ENCODE measurements at regions of chr1 and their contacts with region 1.

Region 1: GRCh38 chr1:6438047-6438525 is 13.5 kb downstream of the ESPN start:
- DNase-seq: peak; percentile 84 to 91
- H3K4me3 ChIP-seq: no peak overlapping the region
- H3K27ac ChIP-seq: no peak overlapping the region
- H3K4me1 ChIP-seq: peaks cover 3 to 11% (median 4%) of the 10 kb centered on the region in 4 experiments
- H3K27me3 ChIP-seq: peaks cover 0 to 20% (median 12%) of the 10 kb centered on the region in 4 experiments; a peak in 5 of 7 replicates
- CTCF ChIP-seq: peak; percentile 90 to 97 (median 96)
- EP300 ChIP-seq: no peak
- POLR2A ChIP-seq: no peak
- RAD21 ChIP-seq: peak; percentile 79 to 81

Region 2: DNA sequence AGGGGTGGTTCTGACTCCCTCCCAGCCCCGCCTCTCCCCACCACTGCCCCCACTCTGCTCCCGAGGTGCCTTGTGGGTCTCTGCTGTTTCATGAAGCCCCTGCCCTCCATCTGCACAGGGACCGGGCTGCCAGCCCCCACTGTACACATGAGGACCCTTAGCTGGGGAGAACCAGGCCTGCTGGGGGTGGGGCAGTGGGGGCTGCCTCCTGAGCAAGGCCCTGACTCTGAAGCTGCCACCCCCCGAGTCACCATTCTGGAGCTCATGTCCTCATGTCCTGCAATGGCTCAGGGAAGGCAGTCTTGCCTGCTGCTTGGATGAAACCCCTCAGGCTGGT is 185.7 kb before region 1 on chr1:
- CTCF ChIA-PET with region 1: interaction called, 12 read pairs
- POLR2A ChIA-PET with region 1: no interaction called
- DNase-seq: no peak
- H3K4me3 ChIP-seq: no peak overlapping the region
- H3K27ac ChIP-seq: no peak overlapping the region
- H3K4me1 ChIP-seq: peaks cover 0 to 9% (median 6%) of the 10 kb centered on the region in 4 experiments; a peak in 4 of 7 replicates
- H3K27me3 ChIP-seq: peaks cover 16 to 41% (median 34%) of the 10 kb centered on the region in 4 experiments
- CTCF ChIP-seq: no peak
- EP300 ChIP-seq: no peak
- POLR2A ChIP-seq: no peak
- RAD21 ChIP-seq: no peak

Region 3: DNA sequence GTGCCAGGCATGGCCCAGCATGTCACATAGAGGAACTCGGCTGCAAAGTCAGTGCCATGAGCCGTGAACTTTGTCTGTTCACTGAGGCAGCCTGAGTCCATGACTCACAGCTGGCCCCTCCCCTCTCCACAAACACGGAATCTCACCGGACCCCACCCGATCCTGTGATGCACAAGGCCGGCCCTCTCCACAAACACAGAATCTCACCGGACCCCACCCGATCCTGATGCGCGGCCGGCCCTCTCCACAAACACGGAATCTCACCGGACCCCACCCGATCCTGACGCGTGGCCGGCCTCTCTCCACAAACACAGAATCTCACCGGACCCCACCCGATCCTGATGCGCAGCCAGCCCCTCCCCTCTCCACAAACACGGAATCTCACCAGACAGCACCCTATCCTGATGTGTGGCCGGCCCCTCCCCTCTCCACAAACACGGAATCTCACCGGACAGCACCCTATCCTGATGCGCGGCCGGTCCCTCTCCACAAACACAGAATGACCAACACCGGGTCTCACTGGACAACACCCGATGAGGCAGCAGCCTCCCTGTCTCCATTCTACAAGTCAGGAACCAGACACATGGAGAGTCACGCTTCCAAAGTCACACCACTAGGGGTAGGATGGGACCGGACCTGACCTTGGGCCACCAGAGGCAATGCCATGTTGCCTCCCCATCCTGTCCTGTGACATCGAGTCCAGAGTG is 137.6 kb before region 1 on chr1:
- CTCF ChIA-PET with region 1: no interaction called
- POLR2A ChIA-PET with region 1: no interaction called
- DNase-seq: no peak
- H3K4me3 ChIP-seq: no peak overlapping the region
- H3K27ac ChIP-seq: no peak overlapping the region
- H3K4me1 ChIP-seq: no peaks in the 10 kb centered on the region
- H3K27me3 ChIP-seq: no peaks in the 10 kb centered on the region
- CTCF ChIP-seq: peak in 1 of 3 experiments; percentile 11; a peak in 1 of 4 replicates
- EP300 ChIP-seq: no peak
- POLR2A ChIP-seq: no peak
- RAD21 ChIP-seq: no peak

Region 4: GRCh38 chr1:6350416-6351088 is 87.5 kb before region 1 on chr1:
- CTCF ChIA-PET with region 1: interaction called, 25 read pairs
- POLR2A ChIA-PET with region 1: interaction called, 3 read pairs
- DNase-seq: no peak
- H3K4me3 ChIP-seq: no peak overlapping the region
- H3K27ac ChIP-seq: no peak overlapping the region
- H3K4me1 ChIP-seq: peaks cover 0 to 8% (median 2%) of the 10 kb centered on the region in 4 experiments; a peak in 5 of 7 replicates
- H3K27me3 ChIP-seq: no peaks in the 10 kb centered on the region
- CTCF ChIP-seq: no peak
- EP300 ChIP-seq: no peak
- POLR2A ChIP-seq: no peak
- RAD21 ChIP-seq: no peak

Region 5: DNA sequence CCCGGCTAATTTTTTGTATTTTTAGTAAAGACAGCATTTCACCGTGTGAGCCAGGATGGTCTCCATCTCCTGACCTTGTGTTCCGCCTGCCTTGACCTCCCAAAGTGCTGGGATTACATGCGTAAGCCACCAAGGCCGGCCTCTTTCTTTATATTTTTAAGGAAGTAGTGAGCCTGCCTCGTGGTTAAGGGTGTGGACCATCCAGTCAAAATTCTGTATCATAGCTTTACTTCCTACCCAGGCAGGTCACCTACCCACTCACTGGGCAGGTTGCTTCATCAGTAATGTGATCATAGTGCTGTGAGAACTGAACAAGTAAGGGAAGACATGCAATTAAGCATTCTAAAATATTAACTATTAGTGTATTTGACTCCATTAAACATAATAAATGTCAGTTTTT is 36.4 kb before region 1 on chr1:
- CTCF ChIA-PET with region 1: interaction called, 30 read pairs
- POLR2A ChIA-PET with region 1: no interaction called
- DNase-seq: no peak
- H3K4me3 ChIP-seq: no peak overlapping the region
- H3K27ac ChIP-seq: no peak overlapping the region
- H3K4me1 ChIP-seq: no peaks in the 10 kb centered on the region
- H3K27me3 ChIP-seq: peaks cover 0 to 4% (median 2%) of the 10 kb centered on the region in 4 experiments; a peak in 4 of 7 replicates
- CTCF ChIP-seq: no peak
- EP300 ChIP-seq: no peak
- POLR2A ChIP-seq: no peak
- RAD21 ChIP-seq: no peak

Region 6: DNA sequence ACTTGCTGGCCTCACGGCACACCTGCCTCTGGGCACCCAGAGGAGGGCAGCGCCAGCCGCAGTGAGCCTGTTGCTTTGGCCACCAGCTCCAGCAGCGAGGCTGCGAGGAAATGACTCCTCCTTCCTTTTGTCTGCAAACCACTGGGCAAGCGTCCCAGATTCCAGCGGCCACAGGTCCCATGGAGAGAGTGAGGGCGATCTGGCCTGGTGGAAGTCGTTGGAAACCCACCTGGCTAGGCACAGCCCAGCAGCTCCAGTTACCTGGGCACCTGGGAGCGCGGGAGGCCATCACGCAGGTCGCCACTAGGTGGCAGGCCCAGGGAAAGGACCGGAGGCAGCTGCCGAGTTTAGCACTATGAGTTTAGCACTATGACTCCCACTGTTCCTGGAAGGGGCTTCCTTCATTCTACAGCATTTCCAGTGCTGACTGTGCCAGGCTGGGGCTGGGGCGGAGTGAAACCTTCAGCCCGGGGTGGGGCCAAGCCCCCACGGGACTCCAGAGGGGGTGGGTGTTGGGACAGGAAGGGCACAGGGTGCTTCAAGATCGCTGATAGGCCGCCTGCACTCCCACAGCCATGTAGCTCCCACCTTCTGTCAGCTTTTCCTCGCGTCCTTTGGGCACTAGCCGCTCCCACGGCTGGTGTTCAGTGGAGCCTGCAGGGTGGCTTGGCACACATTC is 14.6 kb before region 1 on chr1:
- CTCF ChIA-PET with region 1: interaction called, 321 read pairs
- POLR2A ChIA-PET with region 1: interaction called, 15 read pairs
- DNase-seq: peak; percentile 57 to 92
- H3K4me3 ChIP-seq: peak overlapping the region in 3 of 4 experiments; percentile 15 to 52 (median 19); a peak in 5 of 8 replicates
- H3K27ac ChIP-seq: no peak overlapping the region
- H3K4me1 ChIP-seq: peaks cover 0 to 30% (median 11%) of the 10 kb centered on the region in 4 experiments; a peak in 5 of 7 replicates
- H3K27me3 ChIP-seq: peaks cover 63 to 87% (median 79%) of the 10 kb centered on the region in 4 experiments
- CTCF ChIP-seq: peak in 2 of 3 experiments; percentile 95 to 96; a peak in 3 of 4 replicates
- EP300 ChIP-seq: no peak
- POLR2A ChIP-seq: no peak
- RAD21 ChIP-seq: peak; percentile 54 to 69

Region 7: DNA sequence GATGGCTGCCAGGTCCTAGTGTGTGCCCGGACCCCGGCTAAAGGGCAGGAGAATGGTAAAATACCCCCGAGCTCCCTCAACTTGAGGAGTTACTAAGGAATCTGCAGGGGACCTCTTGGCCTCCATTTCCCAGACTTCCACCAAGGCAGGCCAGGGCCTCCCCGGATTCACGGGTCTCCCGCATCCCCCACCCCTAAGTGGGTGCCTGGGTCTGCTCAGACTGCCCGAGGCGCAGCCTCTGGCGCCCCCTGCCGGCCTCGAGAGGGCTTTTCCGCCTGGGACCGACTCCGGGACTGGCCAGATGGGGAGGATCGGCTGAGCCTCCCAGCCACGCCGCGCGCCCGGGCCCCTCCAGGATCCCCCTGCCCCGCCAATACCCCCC is 51.7 kb after region 1 on chr1:
- CTCF ChIA-PET with region 1: interaction called, 168 read pairs
- POLR2A ChIA-PET with region 1: interaction called, 3 read pairs
- DNase-seq: peak in 1 of 2 experiments; percentile 93
- H3K4me3 ChIP-seq: peak overlapping the region; percentile 45 to 80 (median 68)
- H3K27ac ChIP-seq: no peak overlapping the region
- H3K4me1 ChIP-seq: peaks cover 0 to 23% (median 13%) of the 10 kb centered on the region in 4 experiments; a peak in 6 of 7 replicates
- H3K27me3 ChIP-seq: no peaks in the 10 kb centered on the region; a peak in 2 of 7 replicates
- CTCF ChIP-seq: peak in 2 of 3 experiments; percentile 84 to 90; a peak in 3 of 4 replicates
- EP300 ChIP-seq: no peak
- POLR2A ChIP-seq: no peak
- RAD21 ChIP-seq: peak; percentile 68 to 74